ENCODE measurements at regions of chr2 and their contacts with region 1.

Region 1: GRCh38 chr2:112958428-112959108 is 19.2 kb upstream of the IL36G start:
- DNase-seq: no peak
- H3K4me3 ChIP-seq: no peak overlapping the region
- H3K27ac ChIP-seq: no peak overlapping the region
- H3K4me1 ChIP-seq: no peaks in the 10 kb centered on the region
- H3K27me3 ChIP-seq: no peaks in the 10 kb centered on the region
- CTCF ChIP-seq: peak; percentile 58 to 80 (median 68)
- EP300 ChIP-seq: no peak
- POLR2A ChIP-seq: no peak

Region 2: DNA sequence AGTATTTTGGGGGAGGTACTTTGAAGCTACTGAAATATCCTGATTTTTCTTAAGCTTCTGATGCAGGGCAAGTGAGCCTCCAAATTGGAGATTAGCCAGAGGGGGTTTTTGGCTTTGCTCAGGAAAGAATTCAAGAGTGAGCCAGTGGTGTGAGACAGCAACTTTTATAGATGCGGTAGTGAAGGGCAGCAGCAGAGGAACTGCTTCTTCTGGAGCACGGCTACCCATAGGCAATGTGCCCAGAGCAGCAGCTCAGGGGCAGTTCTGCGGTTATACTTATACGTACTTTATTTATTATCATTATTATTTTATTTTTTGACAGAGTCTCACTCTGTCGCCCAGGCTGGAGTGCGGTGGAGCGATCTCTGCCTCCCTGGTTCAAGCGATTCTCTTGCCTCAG is 257.5 kb before region 1 on chr2:
- in situ Hi-C with region 1: no loop called
- intact Hi-C with region 1: no loop called
- DNase-seq: no peak
- H3K4me3 ChIP-seq: no peak overlapping the region
- H3K27ac ChIP-seq: peak overlapping the region; percentile 16 to 58 (median 37)
- H3K4me1 ChIP-seq: no peaks in the 10 kb centered on the region
- H3K27me3 ChIP-seq: no peaks in the 10 kb centered on the region
- CTCF ChIP-seq: no peak
- EP300 ChIP-seq: no peak
- POLR2A ChIP-seq: no peak

Region 3: GRCh38 chr2:112726497-112727190 is 231.9 kb before region 1 on chr2:
- in situ Hi-C with region 1: loop called in 1 of 4 experiments (anchors 25 kb)
- intact Hi-C with region 1: no loop called
- DNase-seq: peak; percentile 92
- H3K4me3 ChIP-seq: no peak overlapping the region
- H3K27ac ChIP-seq: no peak overlapping the region
- H3K4me1 ChIP-seq: peaks cover 0 to 3% (median 3%) of the 10 kb centered on the region in 4 donors
- H3K27me3 ChIP-seq: no peaks in the 10 kb centered on the region
- CTCF ChIP-seq: peak; percentile 94 to 97 (median 96)
- EP300 ChIP-seq: no peak
- POLR2A ChIP-seq: no peak